ENCODE measurements at regions of chr11 and their contacts with region 1.

Region 1: DNA sequence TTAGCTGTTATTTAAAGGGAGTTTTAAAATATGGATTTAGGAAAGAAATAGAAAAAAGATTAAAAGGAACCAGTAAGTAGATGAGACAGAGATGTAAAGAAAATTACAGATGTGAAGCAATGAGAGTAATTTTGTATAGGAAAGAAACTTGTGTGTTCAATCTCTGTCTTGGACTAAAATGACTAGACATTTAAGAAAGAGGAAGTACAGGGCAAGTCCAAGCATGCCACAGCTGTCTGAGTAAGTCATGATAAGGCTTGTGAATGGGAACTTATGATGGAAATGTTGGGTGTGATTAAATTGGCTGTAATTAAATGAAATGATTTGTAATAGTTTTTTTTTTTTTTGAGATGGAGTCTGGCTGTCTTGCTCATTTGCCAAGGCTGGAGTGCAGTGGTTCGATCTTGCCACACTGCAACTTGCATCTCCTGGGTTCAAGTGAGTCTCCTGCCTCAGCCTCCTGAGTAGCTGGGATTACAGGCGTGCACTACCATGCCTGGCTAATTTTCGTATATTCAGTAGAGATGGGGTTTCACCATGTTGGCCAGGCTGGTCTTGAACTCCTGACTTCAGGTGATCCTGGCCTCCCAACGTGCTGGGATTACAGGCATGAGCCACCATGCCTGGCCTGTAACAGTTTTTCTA is 5.9 kb upstream of the ACY3 start:
- DNase-seq: no peak
- ATAC-seq: no peak
- H3K4me3 ChIP-seq: no peak overlapping the region
- H3K4me3 Mint-ChIP-seq: no peak overlapping the region
- H3K27ac ChIP-seq: no peak overlapping the region
- H3K27ac Mint-ChIP-seq: peak overlapping the region in 1 of 9 donors; percentile 49
- H3K4me1 ChIP-seq: no peaks in the 10 kb centered on the region
- H3K4me1 Mint-ChIP-seq: peaks cover 0 to 5% (median 0%) of the 10 kb centered on the region in 7 donors
- H3K27me3 ChIP-seq: no peaks in the 10 kb centered on the region
- H3K27me3 Mint-ChIP-seq: peaks cover 0 to 17% (median 0%) of the 10 kb centered on the region in 5 donors

Region 2: DNA sequence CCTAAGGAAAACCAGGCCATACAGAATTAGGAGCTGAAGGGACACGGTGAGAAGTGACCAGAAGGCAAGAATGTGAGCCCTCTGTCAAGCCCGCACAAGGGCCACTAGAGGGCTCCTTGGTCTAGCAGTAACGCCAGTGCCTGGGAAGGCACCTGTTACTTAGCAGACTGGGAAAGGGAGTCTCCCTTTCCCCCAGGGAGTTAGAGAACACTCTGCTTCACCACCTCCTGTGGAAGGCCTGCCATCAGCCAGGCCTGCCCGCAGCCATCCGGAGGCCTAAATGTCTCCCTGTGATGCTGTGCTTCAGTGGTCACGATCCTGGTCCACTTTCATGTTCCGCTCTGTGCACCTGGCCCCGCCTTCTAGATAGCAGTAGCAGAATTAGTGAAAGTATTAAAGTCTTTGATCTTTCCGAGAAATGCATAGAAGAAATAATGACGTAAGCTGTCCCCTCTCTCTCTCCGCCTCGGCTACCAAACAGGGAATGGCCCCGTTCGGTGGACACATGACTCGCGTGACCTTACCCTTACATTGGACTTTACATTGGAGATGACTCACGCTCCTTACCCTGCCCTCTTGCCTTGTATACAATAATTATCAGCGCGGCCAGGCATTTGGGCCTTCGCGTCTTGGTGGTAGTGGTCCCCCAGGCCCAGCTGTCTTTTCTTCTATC is 83.5 kb before region 1 on chr11:
- CTCF ChIA-PET with region 1: no interaction called
- POLR2A ChIA-PET with region 1: no interaction called
- intact Hi-C with region 1: loop called (anchors 1 to 2 kb)
- DNase-seq: peak in 2 of 9 donors; percentile 12 to 14
- ATAC-seq: no peak
- H3K4me3 ChIP-seq: no peak overlapping the region
- H3K4me3 Mint-ChIP-seq: no peak overlapping the region
- H3K27ac ChIP-seq: no peak overlapping the region
- H3K27ac Mint-ChIP-seq: peak overlapping the region in 1 of 9 donors; percentile 19
- H3K4me1 ChIP-seq: no peaks in the 10 kb centered on the region
- H3K4me1 Mint-ChIP-seq: no peaks in the 10 kb centered on the region
- H3K27me3 ChIP-seq: no peaks in the 10 kb centered on the region
- H3K27me3 Mint-ChIP-seq: peaks cover 12 to 24% (median 21%) of the 10 kb centered on the region in 5 donors

Region 3: GRCh38 chr11:67613960-67614715 is 42.3 kb before region 1 on chr11:
- CTCF ChIA-PET with region 1: interaction called, 3 read pairs
- POLR2A ChIA-PET with region 1: interaction called, 5 read pairs
- intact Hi-C with region 1: loop called in 1 of 2 experiments (anchors 1 kb)
- DNase-seq: peak; percentile 65 to 89 (median 85)
- ATAC-seq: peak; percentile 95
- H3K4me3 ChIP-seq: peak overlapping the region; percentile 60
- H3K4me3 Mint-ChIP-seq: peak overlapping the region; percentile 59 to 87 (median 82)
- H3K27ac ChIP-seq: peak overlapping the region; percentile 96
- H3K27ac Mint-ChIP-seq: peak overlapping the region; percentile 92 to 99 (median 98)
- H3K4me1 ChIP-seq: peaks cover 25 to 26% of the 10 kb centered on the region in 2 donors
- H3K4me1 Mint-ChIP-seq: peaks cover 21 to 50% (median 37%) of the 10 kb centered on the region in 7 donors
- H3K27me3 ChIP-seq: no peaks in the 10 kb centered on the region
- H3K27me3 Mint-ChIP-seq: peaks cover 0 to 9% (median 0%) of the 10 kb centered on the region in 5 donors

Region 4: GRCh38 chr11:67640021-67640757 is 16.2 kb before region 1 on chr11:
- CTCF ChIA-PET with region 1: no interaction called
- POLR2A ChIA-PET with region 1: no interaction called
- intact Hi-C with region 1: loop called in 1 of 2 experiments (anchors 1 kb)
- DNase-seq: peak in 6 of 9 donors; percentile 28 to 49 (median 40)
- ATAC-seq: peak; percentile 87
- H3K4me3 ChIP-seq: no peak overlapping the region
- H3K4me3 Mint-ChIP-seq: no peak overlapping the region
- H3K27ac ChIP-seq: no peak overlapping the region
- H3K27ac Mint-ChIP-seq: no peak overlapping the region
- H3K4me1 ChIP-seq: no peaks in the 10 kb centered on the region
- H3K4me1 Mint-ChIP-seq: peaks cover 0 to 3% (median 0%) of the 10 kb centered on the region in 7 donors
- H3K27me3 ChIP-seq: no peaks in the 10 kb centered on the region
- H3K27me3 Mint-ChIP-seq: no peaks in the 10 kb centered on the region

Measured in naive thymus-derived CD4-positive, alpha-beta T cell (primary cell).